Psoas muscle (tissue), 8 donors: ENCODE measurements at regions of chr7 and their contacts with region 1.

Region 1: GRCh38 chr7:23273141-23273599 is 26.0 kb upstream of the MALSU1 start:
- DNase-seq: peak; percentile 82 to 92
- ATAC-seq: peak; percentile 97 to 99 (median 98)
- H3K4me3 ChIP-seq: peak overlapping the region; percentile 59
- H3K27ac ChIP-seq: peak overlapping the region; percentile 71
- H3K4me1 ChIP-seq: peaks cover 7% of the 10 kb centered on the region
- H3K27me3 ChIP-seq: no peaks in the 10 kb centered on the region
- CTCF ChIP-seq: peak; percentile 85

Region 2: GRCh38 chr7:23462846-23463245 is 189.7 kb after region 1 on chr7:
- intact Hi-C with region 1: loop called (anchors 2 kb)
- DNase-seq: no peak
- ATAC-seq: peak; percentile 76 to 98 (median 98)
- H3K4me3 ChIP-seq: no peak overlapping the region
- H3K27ac ChIP-seq: no peak overlapping the region
- H3K4me1 ChIP-seq: peaks cover 4% of the 10 kb centered on the region
- H3K27me3 ChIP-seq: peaks cover 0 to 70% (median 7%) of the 10 kb centered on the region in 3 donors
- CTCF ChIP-seq: peak; percentile 44

Region 3: DNA sequence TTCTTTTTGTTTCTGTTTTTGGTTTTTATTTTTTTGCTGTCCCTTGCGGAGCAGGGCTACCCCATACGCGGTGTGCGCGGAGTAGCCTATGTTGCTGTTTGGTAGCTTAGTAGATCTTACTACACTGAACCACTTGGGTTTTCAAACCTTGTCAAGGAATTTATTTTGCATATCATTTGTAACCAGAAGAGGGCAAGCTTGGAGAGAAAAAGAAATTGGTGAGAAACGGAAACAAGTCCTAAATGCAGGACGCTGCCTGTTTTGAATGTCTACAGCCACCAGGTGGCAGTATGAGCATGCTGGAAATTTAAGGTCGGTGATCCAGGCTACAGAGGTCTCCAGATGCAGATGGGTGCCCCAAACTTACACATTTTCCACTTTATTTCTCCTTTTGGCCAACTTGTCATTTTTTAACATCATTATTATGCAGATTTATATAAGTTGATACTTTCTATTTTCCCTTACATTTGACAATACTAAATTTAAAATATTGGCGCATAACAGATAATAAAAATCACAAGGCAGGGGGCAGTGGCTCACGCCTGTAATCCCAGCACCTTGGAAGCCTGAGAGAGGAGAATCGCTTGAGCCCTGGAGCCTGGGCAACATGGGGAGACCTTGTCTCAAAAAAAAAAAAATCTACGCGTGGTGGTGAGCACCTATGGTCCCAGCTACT is 273.9 kb after region 1 on chr7:
- intact Hi-C with region 1: loop called in 1 of 2 experiments (anchors 10 kb)
- DNase-seq: peak; percentile 60 to 71
- ATAC-seq: peak; percentile 68 to 92 (median 79)
- H3K4me3 ChIP-seq: no peak overlapping the region
- H3K27ac ChIP-seq: no peak overlapping the region
- H3K4me1 ChIP-seq: no peaks in the 10 kb centered on the region
- H3K27me3 ChIP-seq: no peaks in the 10 kb centered on the region
- CTCF ChIP-seq: peak; percentile 94

Region 4: GRCh38 chr7:23712368-23713284 is 439.5 kb after region 1 on chr7:
- intact Hi-C with region 1: loop called (anchors 10 kb)
- DNase-seq: no peak
- ATAC-seq: peak; percentile 51 to 75 (median 55)
- H3K4me3 ChIP-seq: no peak overlapping the region
- H3K27ac ChIP-seq: no peak overlapping the region
- H3K4me1 ChIP-seq: no peaks in the 10 kb centered on the region
- H3K27me3 ChIP-seq: peaks cover 0 to 4% (median 0%) of the 10 kb centered on the region in 3 donors
- CTCF ChIP-seq: peak; percentile 67